Activated T-helper 1 cell treated with anti-CD3 and anti-CD28 coated beads, Interleukin-12 subunit alpha, Interleukin-12 subunit beta, Interleukin-2, Interleukin-4 antibody, amounts not matched to agents 30 ng/mL and 10 ng/mL and 1 ng/mL, durations not matched to agents 14 hours and 24 hours and 36 hours (primary cell): ENCODE measurements at regions of chr6 and their contacts with region 1.

Region 1: GRCh38 chr6:24855395-24856245 is 56.9 kb upstream of the ARMH2 start:
- DNase-seq: peak; percentile 58
- H3K4me3 Mint-ChIP-seq: no peak overlapping the region
- H3K27ac Mint-ChIP-seq: peak overlapping the region; percentile 88
- H3K4me1 Mint-ChIP-seq: peaks cover 52% of the 10 kb centered on the region
- H3K27me3 Mint-ChIP-seq: no peaks in the 10 kb centered on the region

Region 2: DNA sequence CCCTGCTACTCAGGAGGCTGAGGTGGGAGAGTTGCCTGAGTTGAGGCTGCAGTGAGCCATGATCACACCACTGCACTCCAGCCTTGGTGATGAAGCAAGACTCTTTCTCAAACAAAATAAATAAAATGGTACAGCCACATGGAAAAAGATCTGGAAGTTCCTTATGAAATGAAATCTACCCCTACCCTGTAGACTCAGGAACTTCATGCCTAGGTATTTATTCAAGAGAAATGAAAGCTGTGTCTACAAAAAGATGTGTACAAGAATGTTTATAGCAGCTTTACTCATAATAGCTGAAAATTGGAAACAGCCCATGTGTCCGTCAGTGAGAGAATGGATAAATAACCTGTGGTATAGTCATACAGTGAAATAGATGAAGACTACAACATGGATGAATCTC is 121.5 kb before region 1 on chr6:
- intact Hi-C with region 1: no loop called
- DNase-seq: no peak
- H3K4me3 Mint-ChIP-seq: no peak overlapping the region
- H3K27ac Mint-ChIP-seq: no peak overlapping the region
- H3K4me1 Mint-ChIP-seq: no peaks in the 10 kb centered on the region
- H3K27me3 Mint-ChIP-seq: peaks cover 5% of the 10 kb centered on the region

Region 3: GRCh38 chr6:24774696-24775519 is 80.7 kb before region 1 on chr6 and contains the start of gene GMNN:
- intact Hi-C with region 1: loop called (anchors 5 kb)
- DNase-seq: peak; percentile 96
- H3K4me3 Mint-ChIP-seq: peak within 1 kb of the TSS; percentile 98
- H3K27ac Mint-ChIP-seq: peak within 1 kb of the TSS; percentile 98
- H3K4me1 Mint-ChIP-seq: peaks cover 39% of the 10 kb centered on the region
- H3K27me3 Mint-ChIP-seq: no peaks in the 10 kb centered on the region
- total RNA-seq, gene GMNN: 80.8 and 83.5 TPM in 2 replicates

Region 4: GRCh38 chr6:24899997-24900325 is 44.3 kb after region 1 on chr6:
- intact Hi-C with region 1: loop called (anchors 1 kb)
- DNase-seq: no peak
- H3K4me3 Mint-ChIP-seq: peak overlapping the region; percentile 74
- H3K27ac Mint-ChIP-seq: peak overlapping the region; percentile 77
- H3K4me1 Mint-ChIP-seq: peaks cover 48% of the 10 kb centered on the region
- H3K27me3 Mint-ChIP-seq: no peaks in the 10 kb centered on the region

Region 5: DNA sequence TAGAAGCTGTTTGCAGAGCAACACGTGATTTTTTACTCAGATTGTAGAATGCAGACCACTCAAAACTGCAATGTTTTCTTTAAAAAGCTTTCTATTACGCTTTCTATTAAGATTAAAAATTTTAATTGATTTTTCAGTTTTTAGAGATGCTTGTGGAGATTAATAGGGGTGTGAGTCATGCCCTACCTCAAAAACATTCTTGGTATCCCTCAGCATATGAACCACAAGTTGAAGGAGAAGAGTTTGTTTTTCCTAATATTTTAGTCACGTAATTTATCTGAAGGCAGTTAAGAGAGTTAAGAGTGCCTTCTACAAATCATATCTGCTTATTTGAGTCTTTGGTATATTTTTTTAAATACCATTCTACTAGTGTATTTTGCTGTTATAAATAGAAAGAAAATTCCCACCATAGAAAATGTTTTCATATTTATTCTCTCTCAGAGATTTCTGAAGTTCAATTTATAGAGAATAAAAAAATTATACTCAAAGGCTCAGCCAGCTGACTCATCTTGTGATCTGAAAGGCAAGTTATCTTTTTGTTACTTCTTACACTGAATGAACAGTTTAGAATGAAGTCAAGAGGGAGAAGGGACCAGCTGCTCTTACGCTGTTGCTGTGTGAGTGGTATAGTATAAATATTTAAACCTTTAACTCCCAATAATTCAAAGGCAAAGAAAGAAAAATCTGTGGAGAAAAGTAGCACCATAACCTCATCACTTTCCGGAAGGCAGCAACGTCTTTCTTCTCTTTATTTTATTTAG is 72.5 kb after region 1 on chr6:
- intact Hi-C with region 1: loop called (anchors 1 kb)
- DNase-seq: no peak
- H3K4me3 Mint-ChIP-seq: peak overlapping the region; percentile 92
- H3K27ac Mint-ChIP-seq: peak overlapping the region; percentile 97
- H3K4me1 Mint-ChIP-seq: peaks cover 90% of the 10 kb centered on the region
- H3K27me3 Mint-ChIP-seq: no peaks in the 10 kb centered on the region

Region 6: GRCh38 chr6:24991810-24992467 is 136.3 kb after region 1 on chr6:
- intact Hi-C with region 1: loop called (anchors 1 kb)
- DNase-seq: peak; percentile 71
- H3K4me3 Mint-ChIP-seq: peak overlapping the region; percentile 21
- H3K27ac Mint-ChIP-seq: peak overlapping the region; percentile 80
- H3K4me1 Mint-ChIP-seq: peaks cover 40% of the 10 kb centered on the region
- H3K27me3 Mint-ChIP-seq: no peaks in the 10 kb centered on the region

Region 7: DNA sequence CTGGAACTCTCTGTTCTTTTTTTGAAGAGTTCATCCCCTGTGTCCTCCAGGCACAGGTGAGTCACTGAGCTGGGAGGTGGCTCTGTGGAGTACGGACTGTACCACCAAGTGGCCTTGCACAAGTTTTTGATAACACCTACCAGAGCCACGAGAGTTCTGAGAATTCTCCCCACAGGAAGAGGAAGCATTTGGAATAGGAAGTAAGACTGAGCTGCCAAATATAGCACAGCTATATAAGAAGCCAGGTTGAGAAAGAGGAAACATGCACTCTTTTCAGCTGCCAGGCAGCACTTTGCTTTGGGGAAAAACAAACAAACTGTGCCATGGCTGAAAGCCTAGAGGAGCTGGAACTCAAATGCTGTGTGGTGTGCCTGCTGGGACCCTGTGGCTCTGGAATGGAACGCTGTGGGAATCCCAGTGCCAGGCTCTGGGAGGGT is 151.0 kb after region 1 on chr6:
- intact Hi-C with region 1: no loop called
- DNase-seq: peak; percentile 55
- H3K4me3 Mint-ChIP-seq: peak overlapping the region; percentile 9
- H3K27ac Mint-ChIP-seq: peak overlapping the region; percentile 87
- H3K4me1 Mint-ChIP-seq: peaks cover 82% of the 10 kb centered on the region
- H3K27me3 Mint-ChIP-seq: no peaks in the 10 kb centered on the region

Region 8: GRCh38 chr6:25070547-25071366 is 215.1 kb after region 1 on chr6:
- intact Hi-C with region 1: loop called (anchors 1 kb)
- DNase-seq: peak; percentile 74
- H3K4me3 Mint-ChIP-seq: no peak overlapping the region
- H3K27ac Mint-ChIP-seq: peak overlapping the region; percentile 86
- H3K4me1 Mint-ChIP-seq: peaks cover 10% of the 10 kb centered on the region
- H3K27me3 Mint-ChIP-seq: peaks cover 3% of the 10 kb centered on the region